PC-9 (cell line): ENCODE measurements at regions of chr18 and their contacts with region 1.

Region 1: GRCh38 chr18:74204526-74205152 is 56.3 kb downstream of the TIMM21 start:
- DNase-seq: no peak
- H3K4me3 ChIP-seq: no peak overlapping the region
- H3K27ac ChIP-seq: no peak overlapping the region
- H3K4me1 ChIP-seq: peaks cover 7% of the 10 kb centered on the region
- H3K27me3 ChIP-seq: no peaks in the 10 kb centered on the region
- CTCF ChIP-seq: no peak

Region 2: GRCh38 chr18:73626859-73627258 is 577.8 kb before region 1 on chr18:
- CTCF ChIA-PET with region 1: no interaction called
- POLR2A ChIA-PET with region 1: interaction called, 18 read pairs
- intact Hi-C with region 1: no loop called
- DNase-seq: no peak
- H3K4me3 ChIP-seq: no peak overlapping the region
- H3K27ac ChIP-seq: no peak overlapping the region
- H3K4me1 ChIP-seq: no peaks in the 10 kb centered on the region
- H3K27me3 ChIP-seq: no peaks in the 10 kb centered on the region
- CTCF ChIP-seq: no peak

Region 3: DNA sequence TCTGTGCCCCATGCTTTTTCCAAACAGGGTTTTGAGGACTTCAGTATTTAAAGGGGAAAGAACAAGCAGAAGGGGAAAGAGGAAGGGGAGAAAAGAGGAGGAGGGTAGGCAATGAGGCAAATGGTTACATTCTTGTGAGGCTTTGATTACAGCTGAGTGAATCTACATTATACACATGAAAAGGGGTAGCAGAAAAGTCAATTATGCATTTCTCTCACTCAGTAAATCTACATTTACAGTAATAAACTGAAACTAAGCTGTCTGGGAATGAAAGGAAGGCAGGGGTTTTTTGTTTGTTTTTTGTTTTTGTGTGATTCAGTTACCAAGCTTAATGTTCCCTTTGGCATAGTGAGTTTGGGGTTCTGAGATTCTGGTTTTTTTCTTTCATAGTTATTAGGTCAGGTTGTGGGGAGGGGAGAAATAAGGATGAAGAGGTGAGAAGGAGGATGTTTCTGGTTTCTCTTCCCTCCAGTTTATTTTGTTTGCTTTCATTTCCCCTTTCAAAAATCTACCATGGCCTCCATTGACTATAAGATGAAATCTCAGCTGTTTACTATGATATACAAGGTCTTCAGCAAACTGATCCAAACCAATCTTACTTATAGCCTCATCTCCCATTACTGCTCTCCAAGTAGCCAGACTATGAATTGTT is 129.7 kb after region 1 on chr18:
- CTCF ChIA-PET with region 1: no interaction called
- POLR2A ChIA-PET with region 1: no interaction called
- intact Hi-C with region 1: no loop called
- DNase-seq: no peak
- H3K4me3 ChIP-seq: no peak overlapping the region
- H3K27ac ChIP-seq: no peak overlapping the region
- H3K4me1 ChIP-seq: no peaks in the 10 kb centered on the region
- H3K27me3 ChIP-seq: no peaks in the 10 kb centered on the region
- CTCF ChIP-seq: no peak